ENCODE measurements at regions of chr20 and their contacts with region 1.

Region 1: DNA sequence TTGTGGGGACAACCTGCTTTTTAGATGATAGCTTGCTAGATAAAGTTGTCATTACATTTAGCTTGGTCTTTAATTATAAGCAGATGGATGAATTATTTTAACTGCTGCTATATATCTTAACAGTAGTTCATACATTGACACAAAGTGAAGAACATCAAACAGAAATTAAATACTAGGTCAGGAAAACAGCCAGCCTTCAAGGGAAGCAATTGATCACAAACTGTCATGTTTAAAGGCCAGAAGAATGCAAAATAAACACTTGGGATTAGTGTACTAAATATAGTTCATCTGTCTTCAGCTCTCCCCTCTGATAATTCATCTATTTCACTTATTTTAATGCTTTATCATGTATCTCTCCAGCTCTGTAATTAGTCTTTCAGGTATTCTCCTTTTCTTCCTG is 225.1 kb upstream of the FERMT1 start:
- DNase-seq: no peak
- ATAC-seq: no peak
- H3K4me3 ChIP-seq: no peak overlapping the region
- H3K27ac ChIP-seq: no peak overlapping the region
- H3K4me1 ChIP-seq: peaks cover 0 to 5% (median 0%) of the 10 kb centered on the region in 9 donors
- H3K27me3 ChIP-seq: no peaks in the 10 kb centered on the region
- CTCF ChIP-seq: no peak

Region 2: GRCh38 chr20:6008254-6008653 is 339.7 kb before region 1 on chr20:
- intact Hi-C with region 1: no loop called
- DNase-seq: peak; percentile 18 to 22
- ATAC-seq: peak in 5 of 8 donors; percentile 28 to 66 (median 36)
- H3K4me3 ChIP-seq: peak overlapping the region in 8 of 10 donors; percentile 65 to 88 (median 81)
- H3K27ac ChIP-seq: peak overlapping the region; percentile 2 to 94 (median 84)
- H3K4me1 ChIP-seq: peaks cover 0 to 45% (median 28%) of the 10 kb centered on the region in 9 donors
- H3K27me3 ChIP-seq: no peaks in the 10 kb centered on the region
- CTCF ChIP-seq: no peak

Region 3: GRCh38 chr20:6466075-6466810 is 118.3 kb after region 1 on chr20:
- intact Hi-C with region 1: no loop called
- DNase-seq: no peak
- ATAC-seq: no peak
- H3K4me3 ChIP-seq: no peak overlapping the region
- H3K27ac ChIP-seq: no peak overlapping the region
- H3K4me1 ChIP-seq: no peaks in the 10 kb centered on the region
- H3K27me3 ChIP-seq: no peaks in the 10 kb centered on the region
- CTCF ChIP-seq: no peak

Region 4: DNA sequence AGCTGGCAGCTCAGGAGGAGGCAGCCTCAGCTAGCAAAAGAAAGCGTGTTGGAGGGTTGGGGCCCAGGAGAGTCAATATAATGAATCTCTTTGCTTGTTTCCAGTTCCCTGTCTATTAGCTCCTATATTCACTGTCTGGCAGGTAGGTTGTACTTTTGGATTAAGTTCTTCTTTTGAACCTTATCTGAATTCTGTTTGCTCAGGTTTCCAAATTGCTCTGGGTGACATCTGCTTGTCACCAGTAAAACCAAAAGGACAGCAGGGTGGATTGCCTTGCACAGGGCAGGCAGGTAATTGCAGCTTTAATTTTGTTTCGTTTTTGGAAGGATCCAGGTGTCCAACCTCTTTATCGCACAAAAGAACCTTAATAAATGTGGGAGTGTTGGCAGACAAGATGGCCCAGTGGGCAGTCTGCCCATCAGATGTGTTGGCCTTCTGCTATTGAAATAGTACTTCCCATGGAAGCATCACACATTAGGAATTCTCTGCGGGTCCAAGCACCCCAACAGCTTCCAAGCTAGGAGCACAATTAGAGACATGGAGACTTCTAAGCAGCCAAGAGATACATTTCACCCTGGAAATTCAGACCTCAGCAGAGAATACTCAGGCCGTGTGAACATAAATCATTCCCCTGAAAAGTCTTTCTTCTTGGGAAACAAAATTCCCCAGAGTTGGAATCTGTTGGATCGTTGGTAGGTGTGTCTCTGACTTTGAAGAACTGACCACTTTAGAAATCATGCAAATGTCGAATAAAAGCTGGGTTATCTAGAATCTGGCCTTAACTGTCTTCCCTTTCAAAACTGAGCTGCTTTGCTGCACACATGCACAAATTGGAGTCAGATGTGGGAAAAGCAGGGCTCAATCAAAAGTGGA is 132.6 kb after region 1 on chr20:
- intact Hi-C with region 1: no loop called
- DNase-seq: no peak
- ATAC-seq: no peak
- H3K4me3 ChIP-seq: no peak overlapping the region
- H3K27ac ChIP-seq: no peak overlapping the region
- H3K4me1 ChIP-seq: no peaks in the 10 kb centered on the region
- H3K27me3 ChIP-seq: no peaks in the 10 kb centered on the region
- CTCF ChIP-seq: no peak

Region 5: GRCh38 chr20:6492271-6493055 is 144.5 kb after region 1 on chr20:
- intact Hi-C with region 1: loop called in 1 of 10 experiments (anchors 10 kb)
- DNase-seq: no peak
- ATAC-seq: peak in 1 of 8 donors; percentile 60
- H3K4me3 ChIP-seq: no peak overlapping the region
- H3K27ac ChIP-seq: no peak overlapping the region
- H3K4me1 ChIP-seq: peaks cover 0 to 4% (median 0%) of the 10 kb centered on the region in 9 donors
- H3K27me3 ChIP-seq: no peaks in the 10 kb centered on the region
- CTCF ChIP-seq: no peak